Left cardiac atrium (tissue), 4 donors: ENCODE measurements at regions of chr6 and their contacts with region 1.

Region 1: DNA sequence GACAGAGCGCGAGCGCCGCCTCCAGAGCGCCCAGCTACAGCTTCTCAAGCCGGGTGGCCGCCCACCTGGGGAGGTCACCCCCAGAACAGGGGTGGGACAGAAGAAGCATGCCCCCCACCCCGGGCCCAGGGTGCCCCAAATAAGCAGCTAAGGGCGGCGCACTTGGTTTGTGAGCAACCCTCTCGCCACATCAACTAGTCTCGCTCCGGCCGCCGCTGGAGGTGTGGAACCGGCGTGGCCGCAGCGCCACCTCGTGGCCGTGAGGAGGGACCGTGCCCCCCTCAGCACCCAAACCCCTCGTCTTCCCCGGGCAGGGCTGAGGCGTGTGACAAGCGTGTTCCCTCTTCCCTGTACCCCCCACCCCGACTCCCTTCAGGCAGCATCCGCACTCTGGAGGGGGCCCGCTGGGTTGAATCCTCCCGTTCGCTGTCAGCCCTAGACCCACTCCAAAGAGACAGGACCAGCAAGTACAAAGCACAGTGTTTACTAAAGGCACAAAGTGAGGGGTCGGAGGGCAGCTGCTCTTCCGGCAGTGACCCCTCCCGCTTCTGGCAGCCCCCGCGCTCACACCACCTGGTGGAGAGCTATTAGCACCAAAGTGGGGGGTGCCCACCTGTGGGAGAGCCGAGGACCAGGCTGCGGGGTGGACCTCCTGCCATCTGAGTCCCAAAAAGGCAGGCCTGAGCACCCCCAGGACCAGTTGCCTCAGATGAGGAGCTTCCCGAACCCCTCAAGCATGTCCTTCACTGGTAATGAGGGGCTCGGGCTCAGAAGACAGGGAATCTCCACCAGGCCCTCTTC is 45.4 kb downstream of the MDFI start:
- DNase-seq: peak; percentile 89
- ATAC-seq: peak; percentile 86 to 88

Region 2: GRCh38 chr6:41424370-41425058 is 259.2 kb before region 1 on chr6:
- intact Hi-C with region 1: loop called in 1 of 2 experiments (anchors 10 kb)
- DNase-seq: peak; percentile 82
- ATAC-seq: peak; percentile 22 to 23

Region 3: DNA sequence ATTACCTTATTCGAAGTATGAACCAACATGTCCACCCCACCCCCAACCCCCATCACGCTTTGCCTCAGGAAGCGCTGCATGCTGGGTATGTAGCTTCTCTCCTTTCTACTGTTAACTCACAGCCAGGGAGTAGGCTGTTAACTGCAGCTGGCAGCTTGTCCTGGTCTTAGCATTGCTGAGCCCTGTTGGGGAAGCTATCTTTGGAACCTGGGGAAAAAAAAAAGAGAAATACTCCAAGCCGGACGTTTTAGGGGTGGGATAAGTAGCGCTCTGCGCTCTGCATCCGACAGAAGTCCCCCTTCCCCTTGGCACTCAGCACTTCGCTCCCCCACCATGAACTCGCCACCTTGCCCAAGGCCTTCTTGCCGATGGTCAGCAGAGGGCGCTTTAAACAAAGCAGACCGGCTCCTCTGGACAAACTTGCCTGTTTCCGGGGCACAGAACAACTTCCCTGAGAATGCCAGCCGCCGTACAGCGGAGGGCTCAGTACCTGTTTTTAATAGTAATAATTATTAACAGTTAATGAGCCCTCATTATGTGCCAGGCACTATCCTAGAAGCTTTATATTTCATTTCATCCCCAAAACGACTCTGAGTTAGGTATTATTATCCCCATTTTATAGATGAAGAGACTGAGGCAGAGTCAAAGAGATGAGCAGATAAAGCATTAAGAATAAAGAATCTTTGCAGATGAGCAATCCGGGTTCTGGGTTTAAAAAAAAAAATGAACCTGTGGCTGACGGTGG is 80.7 kb before region 1 on chr6:
- intact Hi-C with region 1: loop called (anchors 1 to 2 kb)
- DNase-seq: peak; percentile 81
- ATAC-seq: peak; percentile 82 to 85

Region 4: GRCh38 chr6:41735427-41736356 is 52.0 kb after region 1 on chr6 and contains the start of gene TFEB:
- intact Hi-C with region 1: no loop called
- DNase-seq: peak; percentile 95
- ATAC-seq: peak; percentile 65
- total RNA-seq, gene TFEB: 33.3 to 34.6 TPM

Region 5: DNA sequence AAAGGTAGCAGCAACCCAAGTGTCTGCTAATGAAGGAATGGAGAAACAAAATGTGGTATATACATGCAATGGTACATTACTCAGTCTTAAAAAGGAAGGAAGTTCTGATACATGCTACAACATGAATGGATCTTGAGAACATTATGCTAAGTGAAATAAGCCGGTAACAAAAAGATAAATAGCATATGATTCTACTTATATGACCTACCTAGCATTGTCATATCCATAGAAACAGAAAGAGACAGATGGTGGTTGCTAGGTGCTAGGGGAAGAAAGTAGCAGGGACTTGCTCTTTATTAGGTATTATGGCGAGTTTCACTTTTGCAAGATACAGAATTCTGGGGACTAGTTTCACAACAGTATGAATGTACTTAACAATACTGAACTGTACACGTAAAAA is 926.7 kb after region 1 on chr6:
- intact Hi-C with region 1: no loop called
- DNase-seq: no peak
- ATAC-seq: no peak